Aorta (tissue), 5 donors: ENCODE measurements at regions of chrX and their contacts with region 1.

Region 1: DNA sequence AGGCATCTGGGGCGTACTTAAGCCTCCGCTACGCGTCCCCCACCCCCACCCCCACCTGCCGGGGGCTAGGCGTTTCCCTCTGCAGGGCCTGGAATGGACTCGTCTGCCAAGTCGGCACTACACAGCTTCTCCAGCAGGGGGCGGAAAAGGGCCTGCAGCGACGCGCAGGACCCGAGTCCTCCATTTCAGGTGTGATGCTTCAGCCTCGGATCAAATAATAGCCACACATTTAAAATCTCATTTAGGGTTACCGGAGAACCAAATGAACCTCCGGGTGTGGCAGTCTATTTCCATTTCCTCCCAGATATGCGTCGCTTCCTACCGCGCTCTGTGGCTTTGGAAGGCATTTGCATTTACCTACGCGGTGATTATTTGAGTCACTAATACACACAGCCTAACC is 2.9 kb downstream of the PAK3 start:
- DNase-seq: peak; percentile 68 to 86
- ATAC-seq: no peak
- H3K4me3 ChIP-seq: no peak overlapping the region
- H3K27ac ChIP-seq: no peak overlapping the region
- H3K4me1 ChIP-seq: no peaks in the 10 kb centered on the region
- H3K27me3 ChIP-seq: no peaks in the 10 kb centered on the region

Region 2: GRCh38 chrX:110992611-110993010 is 106.3 kb before region 1 on chrX:
- intact Hi-C with region 1: loop called in 1 of 2 experiments (anchors 2 kb)
- DNase-seq: no peak
- ATAC-seq: no peak
- H3K4me3 ChIP-seq: no peak overlapping the region
- H3K27ac ChIP-seq: no peak overlapping the region
- H3K4me1 ChIP-seq: no peaks in the 10 kb centered on the region
- H3K27me3 ChIP-seq: no peaks in the 10 kb centered on the region

Region 3: GRCh38 chrX:111352424-111352823 is 253.6 kb after region 1 on chrX:
- intact Hi-C with region 1: loop called in 1 of 2 experiments (anchors 10 kb)
- DNase-seq: peak in 1 of 2 donors; percentile 54
- ATAC-seq: peak; percentile 67
- H3K4me3 ChIP-seq: no peak overlapping the region
- H3K27ac ChIP-seq: no peak overlapping the region
- H3K4me1 ChIP-seq: peaks cover 0 to 3% of the 10 kb centered on the region in 2 donors
- H3K27me3 ChIP-seq: no peaks in the 10 kb centered on the region